Ovary (tissue), 10 donors: ENCODE measurements at regions of chr16 and their contacts with region 1.

Region 1: GRCh38 chr16:56324406-56324805 is 100.9 kb downstream of the AMFR start:
- DNase-seq: no peak
- H3K4me3 ChIP-seq: no peak overlapping the region
- H3K27ac ChIP-seq: no peak overlapping the region
- H3K4me1 ChIP-seq: no peaks in the 10 kb centered on the region
- H3K27me3 ChIP-seq: no peaks in the 10 kb centered on the region
- CTCF ChIP-seq: no peak
- EP300 ChIP-seq: no peak
- POLR2A ChIP-seq: no peak

Region 2: DNA sequence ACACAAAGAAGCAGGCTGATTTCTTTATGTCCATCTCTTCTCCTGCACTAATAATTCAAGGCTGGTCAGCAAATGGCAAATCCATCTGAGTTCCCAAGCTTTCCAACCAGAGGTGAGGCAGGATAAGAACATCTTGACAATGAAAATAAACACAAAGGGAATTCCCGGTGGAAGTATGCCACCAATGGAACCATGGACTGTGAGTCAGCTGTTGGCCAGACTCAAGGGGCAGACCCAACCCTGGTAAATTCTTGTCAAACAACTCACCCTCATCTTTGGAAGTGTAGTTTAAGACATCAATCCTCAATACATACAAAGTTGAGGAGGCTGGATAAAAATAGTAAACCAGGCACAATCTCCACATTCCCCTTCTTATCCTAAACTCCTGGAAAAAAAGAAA is 374.9 kb before region 1 on chr16:
- intact Hi-C with region 1: loop called (anchors 2 to 10 kb)
- DNase-seq: no peak
- H3K4me3 ChIP-seq: no peak overlapping the region
- H3K27ac ChIP-seq: no peak overlapping the region
- H3K4me1 ChIP-seq: no peaks in the 10 kb centered on the region
- H3K27me3 ChIP-seq: no peaks in the 10 kb centered on the region
- CTCF ChIP-seq: no peak
- EP300 ChIP-seq: no peak
- POLR2A ChIP-seq: no peak